ENCODE measurements at regions of chrX and their contacts with region 1.

Region 1: DNA sequence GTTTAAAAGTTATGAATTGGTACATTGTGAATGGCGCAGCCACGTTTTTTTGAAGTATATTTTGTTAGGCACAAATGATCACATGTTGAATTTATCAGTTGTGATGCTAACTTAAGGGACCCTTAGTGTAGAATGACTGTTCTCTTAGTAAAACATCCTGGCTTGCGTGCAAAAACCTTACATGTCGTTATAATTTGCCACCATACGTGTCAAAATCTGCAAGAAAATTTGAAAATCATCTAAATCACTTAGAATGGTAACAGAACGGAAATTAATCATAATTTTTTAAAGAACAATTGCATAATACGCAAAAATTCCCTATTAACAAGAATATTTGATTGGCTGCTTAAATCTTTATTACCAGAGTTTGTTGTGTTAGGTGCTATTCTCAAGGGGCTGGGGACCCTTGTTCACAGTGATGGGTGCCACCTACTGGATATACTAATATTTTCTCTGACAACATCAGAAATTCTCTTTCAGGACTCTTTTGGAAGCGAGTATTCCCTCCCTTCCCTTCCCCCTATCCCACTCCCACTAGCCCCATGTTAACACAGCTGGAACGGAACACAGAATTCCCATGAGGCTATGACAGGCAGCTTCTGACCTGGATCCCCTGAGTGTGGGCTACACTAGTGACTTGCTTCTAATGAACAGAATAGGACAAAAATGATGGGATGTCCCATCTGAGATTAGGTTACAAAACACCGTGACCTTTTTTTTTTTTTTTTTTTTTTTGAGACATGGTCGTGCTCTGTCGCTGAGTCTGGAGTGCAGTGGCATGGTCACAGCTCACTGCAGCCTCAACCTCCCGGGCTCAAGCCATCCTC is 71.8 kb downstream of the SUPT20HL2 start:
- DNase-seq: peak in 4 of 6 donors; percentile 33 to 74 (median 50)
- ATAC-seq: peak; percentile 85 to 91 (median 89)
- H3K4me3 ChIP-seq: no peak overlapping the region
- H3K27ac ChIP-seq: peak overlapping the region; percentile 33 to 53 (median 45)
- H3K4me1 ChIP-seq: peaks cover 0 to 8% (median 0%) of the 10 kb centered on the region in 3 donors
- H3K27me3 ChIP-seq: no peaks in the 10 kb centered on the region
- CTCF ChIP-seq: peak in 2 of 4 donors; percentile 8 to 41

Region 2: GRCh38 chrX:24081661-24082264 is 160.3 kb before region 1 on chrX:
- intact Hi-C with region 1: loop called in 1 of 3 experiments (anchors 10 kb)
- DNase-seq: peak; percentile 35 to 71 (median 62)
- ATAC-seq: peak; percentile 83 to 94 (median 89)
- H3K4me3 ChIP-seq: no peak overlapping the region
- H3K27ac ChIP-seq: no peak overlapping the region
- H3K4me1 ChIP-seq: no peaks in the 10 kb centered on the region
- H3K27me3 ChIP-seq: no peaks in the 10 kb centered on the region
- CTCF ChIP-seq: peak in 1 of 4 donors; percentile 14